ENCODE measurements at regions of chr14 and their contacts with region 1.

Region 1: DNA sequence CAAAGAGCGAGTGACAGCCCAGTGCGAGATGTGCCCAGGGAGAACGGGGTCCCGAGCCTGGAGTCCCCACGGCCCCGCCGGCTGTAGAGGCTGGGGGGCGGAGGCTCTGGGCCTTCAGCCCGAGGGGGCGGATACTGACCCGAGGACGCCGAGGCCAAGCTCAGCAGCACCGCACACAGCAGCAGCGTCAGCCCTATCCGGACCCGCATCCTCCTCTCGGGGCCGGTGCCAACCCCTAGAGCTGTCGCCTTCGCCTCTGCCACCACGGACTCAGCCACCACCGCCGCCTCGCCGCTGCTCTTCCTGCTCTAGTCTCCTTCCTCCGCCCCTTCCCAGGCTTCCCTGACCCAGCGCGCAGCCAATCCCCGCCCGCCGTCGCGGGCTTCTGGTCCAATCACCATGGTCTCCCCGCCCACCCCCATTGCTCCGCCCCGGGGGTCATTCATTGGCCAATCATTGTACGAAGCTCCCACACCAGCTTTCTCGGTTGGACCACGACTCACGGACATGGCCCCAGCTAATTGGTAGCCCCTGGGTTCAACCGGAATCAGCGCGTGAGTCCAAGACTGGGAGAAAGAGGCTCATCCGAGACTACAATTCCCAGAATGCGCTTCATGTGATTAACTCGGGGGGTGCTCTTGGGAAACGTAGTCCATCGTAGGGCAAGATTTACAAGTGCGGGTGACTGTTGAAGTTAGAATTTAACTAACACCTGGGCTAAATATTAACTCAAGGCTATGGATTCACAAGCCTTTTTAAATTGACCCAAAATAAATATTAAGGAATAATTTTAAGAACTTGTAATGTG is at the start of gene SEL1L:
- DNase-seq: peak; percentile 100
- ATAC-seq: peak; percentile 99 to 100
- H3K4me3 ChIP-seq: peak within 1 kb of the TSS; percentile 93 to 98 (median 97)
- H3K27ac ChIP-seq: peak within 1 kb of the TSS; percentile 81 to 92 (median 86)
- H3K4me1 ChIP-seq: peaks cover 45 to 55% of the 10 kb centered on the region in 2 donors
- H3K27me3 ChIP-seq: no peaks in the 10 kb centered on the region
- CTCF ChIP-seq: no peak
- POLR2A ChIP-seq: peak; percentile 87 to 91
- total RNA-seq, gene SEL1L: 46.8 to 63.9 (median 51.0) TPM

Region 2: DNA sequence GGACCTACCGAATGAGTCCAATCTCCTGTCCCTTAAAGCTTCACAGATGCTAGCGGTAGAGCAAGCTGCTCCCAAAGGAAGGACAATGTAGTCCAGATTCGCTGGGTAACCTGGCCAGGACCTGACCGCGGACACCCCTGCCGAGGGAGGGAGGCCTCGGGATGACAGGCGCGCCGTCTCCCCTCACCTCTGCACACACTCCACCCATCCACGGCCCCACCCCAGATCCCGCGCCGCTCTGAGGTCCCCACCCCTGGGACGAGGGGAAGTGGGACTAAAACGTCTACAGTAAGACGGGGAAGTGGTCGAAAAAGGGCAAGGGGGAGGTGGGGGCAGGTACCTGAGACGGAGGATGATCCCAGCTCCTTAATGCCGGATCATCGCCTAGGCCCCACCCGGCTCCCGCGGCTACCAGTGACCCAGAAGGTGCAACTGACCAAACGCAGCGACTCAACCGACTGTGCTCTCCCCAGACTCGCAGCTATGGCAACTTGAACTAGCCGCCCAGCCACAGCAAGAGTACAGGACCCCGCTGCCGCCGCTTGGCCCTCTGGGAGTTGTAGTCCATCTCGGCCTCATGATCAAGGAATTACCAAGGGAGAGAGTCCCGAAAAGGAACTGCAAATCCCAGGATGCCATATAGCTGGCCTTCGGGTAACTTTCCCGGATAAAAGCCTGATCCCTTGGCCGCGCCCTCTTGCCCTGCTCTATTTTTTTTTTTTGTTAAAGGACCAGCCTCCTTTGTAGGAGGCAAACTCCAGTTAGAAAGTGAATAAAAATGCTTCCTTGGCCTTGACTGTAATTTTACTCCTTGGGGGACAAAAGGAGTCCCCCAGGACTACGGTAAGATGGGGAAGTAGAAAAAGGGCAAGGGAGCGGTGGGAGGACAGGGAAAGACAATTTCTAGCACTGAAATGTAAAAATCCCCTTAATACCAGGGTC is 592.2 kb before region 1 on chr14 and contains the start of gene CEP128:
- in situ Hi-C with region 1: no loop called
- intact Hi-C with region 1: loop called (anchors 5 kb)
- DNase-seq: peak; percentile 92 to 94
- ATAC-seq: peak; percentile 100
- H3K4me3 ChIP-seq: peak within 1 kb of the TSS; percentile 61 to 85 (median 80)
- H3K27ac ChIP-seq: peak within 1 kb of the TSS; percentile 70 to 79 (median 74)
- H3K4me1 ChIP-seq: peaks cover 5 to 8% of the 10 kb centered on the region in 2 donors
- H3K27me3 ChIP-seq: no peaks in the 10 kb centered on the region
- CTCF ChIP-seq: no peak
- POLR2A ChIP-seq: no peak
- total RNA-seq, gene CEP128: 0.82 to 3.6 (median 1.6) TPM

Region 3: GRCh38 chr14:81582420-81582819 is 48.7 kb after region 1 on chr14:
- in situ Hi-C with region 1: no loop called
- intact Hi-C with region 1: no loop called
- DNase-seq: no peak
- ATAC-seq: no peak
- H3K4me3 ChIP-seq: no peak overlapping the region
- H3K27ac ChIP-seq: no peak overlapping the region
- H3K4me1 ChIP-seq: no peaks in the 10 kb centered on the region
- H3K27me3 ChIP-seq: no peaks in the 10 kb centered on the region
- CTCF ChIP-seq: no peak
- POLR2A ChIP-seq: no peak